ENCODE measurements at regions of chrX and their contacts with region 1.

Region 1: DNA sequence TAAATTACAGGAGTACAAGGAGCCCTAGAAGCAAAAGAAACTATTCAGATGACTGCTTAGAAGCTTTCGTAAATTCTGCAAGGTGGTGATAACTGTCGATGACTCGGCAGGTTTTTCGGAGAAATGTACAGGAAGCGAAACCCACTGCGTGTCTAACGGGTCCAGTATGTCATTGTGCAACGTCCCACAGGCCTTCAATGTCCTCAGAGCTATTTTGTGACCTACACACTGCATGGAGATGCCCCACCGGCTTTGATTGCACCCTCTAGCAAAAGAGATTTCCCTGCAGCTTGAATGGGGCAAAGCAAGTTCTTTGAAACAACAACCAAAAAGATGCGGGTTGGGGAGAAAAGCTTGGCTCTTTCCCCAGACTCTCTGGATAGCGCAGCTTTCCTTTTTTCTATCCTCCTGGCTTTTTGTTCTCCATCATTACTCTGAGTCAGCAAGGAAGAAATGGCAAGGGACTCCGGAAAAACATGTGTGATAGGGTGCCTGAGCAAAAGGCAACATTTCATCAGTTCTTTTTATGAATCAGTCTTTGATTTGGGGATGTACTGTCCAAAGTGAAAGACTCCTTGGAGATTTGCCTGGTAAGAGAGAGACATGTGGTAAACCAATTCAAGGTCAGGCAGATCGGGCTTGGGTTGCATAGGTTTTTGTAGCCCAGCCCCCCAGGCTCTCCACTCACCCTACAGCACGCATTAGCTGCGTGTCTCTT is 112.0 kb upstream of the TBL1X start:
- DNase-seq: peak; percentile 39
- ATAC-seq: no peak
- H3K4me3 ChIP-seq: peak overlapping the region; percentile 41; the same call in 1 of the 2 replicates
- H3K27ac ChIP-seq: peak overlapping the region; percentile 76
- H3K4me1 ChIP-seq: peaks cover 38% of the 10 kb centered on the region
- H3K27me3 ChIP-seq: no peaks in the 10 kb centered on the region
- CTCF ChIP-seq: no peak

Region 2: GRCh38 chrX:8815464-8816065 is 537.3 kb before region 1 on chrX:
- CTCF ChIA-PET with region 1: no interaction called
- POLR2A ChIA-PET with region 1: no interaction called
- intact Hi-C with region 1: loop called (anchors 2 kb)
- DNase-seq: peak; percentile 82
- ATAC-seq: peak; percentile 64
- H3K4me3 ChIP-seq: no peak overlapping the region
- H3K27ac ChIP-seq: no peak overlapping the region
- H3K4me1 ChIP-seq: no peaks in the 10 kb centered on the region
- H3K27me3 ChIP-seq: no peaks in the 10 kb centered on the region
- CTCF ChIP-seq: peak; percentile 80

Region 3: DNA sequence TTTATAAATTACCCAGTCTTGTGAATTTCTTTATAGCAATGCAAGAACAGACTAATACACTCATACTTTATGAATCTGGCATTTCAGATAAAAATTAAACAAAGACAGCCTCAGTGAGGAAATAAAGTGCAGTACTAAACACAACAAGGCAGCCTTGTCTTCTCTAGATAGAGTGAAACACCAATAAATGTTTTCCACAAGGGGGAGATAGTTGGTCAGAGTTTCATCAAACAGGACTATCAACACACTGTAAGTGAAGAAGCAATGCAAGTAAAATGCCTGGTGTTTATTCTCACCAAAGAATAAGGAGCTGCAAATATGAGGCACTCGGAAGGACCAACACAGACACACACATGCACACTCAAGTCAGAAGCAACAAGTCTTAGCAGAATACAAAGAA is 381.7 kb before region 1 on chrX:
- CTCF ChIA-PET with region 1: interaction called, 3 read pairs
- POLR2A ChIA-PET with region 1: no interaction called
- intact Hi-C with region 1: loop called (anchors 1 kb)
- DNase-seq: peak; percentile 79
- ATAC-seq: peak; percentile 90
- H3K4me3 ChIP-seq: no peak overlapping the region
- H3K27ac ChIP-seq: no peak overlapping the region
- H3K4me1 ChIP-seq: no peaks in the 10 kb centered on the region
- H3K27me3 ChIP-seq: no peaks in the 10 kb centered on the region
- CTCF ChIP-seq: peak; percentile 64

Region 4: DNA sequence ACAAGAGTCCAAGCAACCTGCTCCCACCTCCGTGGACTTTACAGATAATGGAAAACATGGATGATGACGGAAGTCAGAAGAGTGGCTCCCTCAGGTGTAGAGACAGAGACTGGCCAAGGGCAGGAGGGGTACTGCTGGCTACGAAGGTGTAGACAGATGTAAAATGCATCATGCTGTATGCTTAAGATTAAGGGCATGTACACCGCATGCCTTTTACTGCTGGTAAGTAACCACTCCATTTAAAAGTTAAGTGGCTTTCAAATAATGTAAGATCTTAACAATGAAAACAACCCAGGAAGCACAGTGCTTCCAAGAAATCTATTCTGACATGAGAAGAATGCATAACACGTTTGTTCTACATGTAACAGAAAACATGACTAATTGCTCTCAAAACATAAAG is 242.0 kb before region 1 on chrX:
- CTCF ChIA-PET with region 1: no interaction called
- POLR2A ChIA-PET with region 1: no interaction called
- intact Hi-C with region 1: loop called (anchors 2 kb)
- DNase-seq: no peak
- ATAC-seq: no peak
- H3K4me3 ChIP-seq: no peak overlapping the region
- H3K27ac ChIP-seq: no peak overlapping the region
- H3K4me1 ChIP-seq: peaks cover 11% of the 10 kb centered on the region; the same call in 1 of the 2 replicates
- H3K27me3 ChIP-seq: no peaks in the 10 kb centered on the region
- CTCF ChIP-seq: no peak

Region 5: GRCh38 chrX:9318213-9318612 is 34.6 kb before region 1 on chrX:
- CTCF ChIA-PET with region 1: no interaction called
- POLR2A ChIA-PET with region 1: no interaction called
- intact Hi-C with region 1: no loop called
- DNase-seq: peak; percentile 35
- ATAC-seq: peak; percentile 25; the same call in 1 of the 2 replicates
- H3K4me3 ChIP-seq: no peak overlapping the region
- H3K27ac ChIP-seq: no peak overlapping the region
- H3K4me1 ChIP-seq: peaks cover 21% of the 10 kb centered on the region
- H3K27me3 ChIP-seq: no peaks in the 10 kb centered on the region
- CTCF ChIP-seq: no peak

Region 6: GRCh38 chrX:9403374-9403773 is 50.5 kb after region 1 on chrX:
- CTCF ChIA-PET with region 1: no interaction called
- POLR2A ChIA-PET with region 1: no interaction called
- intact Hi-C with region 1: no loop called
- DNase-seq: peak; percentile 4
- ATAC-seq: peak; percentile 29
- H3K4me3 ChIP-seq: no peak overlapping the region
- H3K27ac ChIP-seq: no peak overlapping the region
- H3K4me1 ChIP-seq: no peaks in the 10 kb centered on the region
- H3K27me3 ChIP-seq: no peaks in the 10 kb centered on the region
- CTCF ChIP-seq: no peak

Region 7: GRCh38 chrX:9708904-9709553 is 356.2 kb after region 1 on chrX:
- CTCF ChIA-PET with region 1: no interaction called
- POLR2A ChIA-PET with region 1: no interaction called
- intact Hi-C with region 1: loop called (anchors 10 kb)
- DNase-seq: peak; percentile 76
- ATAC-seq: peak; percentile 76
- H3K4me3 ChIP-seq: no peak overlapping the region
- H3K27ac ChIP-seq: 0 out of 2 replicates have a peak overlapping the region, but pooled peaks have one; percentile 20
- H3K4me1 ChIP-seq: peaks cover 11% of the 10 kb centered on the region
- H3K27me3 ChIP-seq: no peaks in the 10 kb centered on the region
- CTCF ChIP-seq: peak; percentile 85

Measured in PC-3 (cell line).